RWPE1 (cell line): ENCODE measurements at regions of chr4 and their contacts with region 1.

Region 1: DNA sequence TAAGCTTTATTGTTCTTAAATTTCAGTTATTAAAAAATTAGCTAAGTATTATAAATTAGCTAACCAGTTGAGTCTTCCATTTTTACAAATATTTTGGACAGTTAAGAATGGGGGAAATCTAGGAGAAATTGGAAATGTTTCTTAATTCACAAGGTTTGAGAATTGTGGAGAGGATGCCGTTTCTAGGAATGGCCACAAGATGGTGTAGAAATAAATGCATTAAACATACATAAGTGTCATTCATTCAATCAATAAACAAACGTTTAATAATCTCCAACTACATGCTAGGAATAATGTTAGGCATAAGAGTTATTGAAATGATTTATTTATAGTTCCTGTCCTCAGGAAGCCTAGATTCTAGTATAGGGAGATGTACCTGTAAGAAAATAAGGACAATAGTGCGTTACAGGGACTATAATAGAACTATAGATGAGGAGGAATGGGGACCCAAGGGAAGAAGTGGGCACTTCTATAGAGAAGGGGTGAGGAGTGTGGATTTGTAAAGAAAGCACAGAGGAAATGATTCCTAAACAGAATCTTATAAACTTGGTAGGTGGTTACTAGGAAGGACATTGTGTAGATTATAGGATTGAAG is 195.7 kb upstream of the ANK2 start:
- DNase-seq: peak; percentile 14
- H3K27ac ChIP-seq: no peak overlapping the region
- CTCF ChIP-seq: peak; percentile 60

Region 2: GRCh38 chr4:112938461-112939058 is 84.8 kb after region 1 on chr4:
- CTCF ChIA-PET with region 1: interaction called, 23 read pairs
- POLR2A ChIA-PET with region 1: no interaction called
- DNase-seq: peak; percentile 38
- H3K27ac ChIP-seq: no peak overlapping the region
- CTCF ChIP-seq: peak; percentile 81